Activated B cell treated with CpG ODN at 0.5 μM for 24 hours (primary cell): ENCODE measurements at regions of chr9 and their contacts with region 1.

Region 1: DNA sequence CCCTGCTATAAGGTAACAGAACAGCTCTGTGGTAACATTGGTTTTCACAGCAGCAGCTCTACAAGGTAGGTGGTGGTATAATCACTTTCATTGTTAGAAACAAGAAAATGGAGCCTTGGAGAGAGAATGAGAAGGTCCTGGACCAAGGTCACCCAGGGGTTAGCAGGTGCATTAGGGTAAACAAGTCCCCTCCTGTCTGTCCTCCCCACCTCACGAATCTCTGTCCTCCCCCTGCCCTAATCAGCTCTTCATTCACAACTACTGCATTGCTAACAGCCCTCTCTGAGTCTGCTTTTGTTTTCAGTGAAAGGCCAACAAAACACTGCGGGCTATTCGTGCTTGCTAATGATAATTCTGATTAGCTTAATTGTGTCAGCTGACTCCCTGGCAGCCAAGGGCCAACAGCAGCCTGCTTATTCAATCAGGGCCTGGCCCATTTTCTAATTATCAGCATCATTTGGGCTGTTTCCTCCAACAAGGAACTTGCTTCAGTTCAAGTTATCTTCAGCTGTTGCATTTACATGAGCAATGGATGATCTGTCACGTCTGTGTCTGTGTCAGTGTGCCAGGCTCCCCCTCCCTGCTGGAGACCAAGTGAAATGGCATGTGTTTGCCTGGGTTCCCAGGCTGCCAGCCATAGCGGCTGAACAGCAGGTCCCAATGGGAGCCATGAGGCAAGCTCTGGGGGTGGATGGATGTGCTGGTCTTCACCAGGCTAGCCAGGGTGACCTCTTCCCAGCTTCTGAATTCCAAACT is 56.7 kb upstream of the EQTN start:
- DNase-seq: no peak
- ATAC-seq: peak; percentile 78
- H3K4me3 Mint-ChIP-seq: no peak overlapping the region
- H3K27ac Mint-ChIP-seq: peak overlapping the region; percentile 14
- H3K4me1 Mint-ChIP-seq: peaks cover 58% of the 10 kb centered on the region
- H3K27me3 Mint-ChIP-seq: no peaks in the 10 kb centered on the region
- CTCF ChIP-seq: no peak

Region 2: DNA sequence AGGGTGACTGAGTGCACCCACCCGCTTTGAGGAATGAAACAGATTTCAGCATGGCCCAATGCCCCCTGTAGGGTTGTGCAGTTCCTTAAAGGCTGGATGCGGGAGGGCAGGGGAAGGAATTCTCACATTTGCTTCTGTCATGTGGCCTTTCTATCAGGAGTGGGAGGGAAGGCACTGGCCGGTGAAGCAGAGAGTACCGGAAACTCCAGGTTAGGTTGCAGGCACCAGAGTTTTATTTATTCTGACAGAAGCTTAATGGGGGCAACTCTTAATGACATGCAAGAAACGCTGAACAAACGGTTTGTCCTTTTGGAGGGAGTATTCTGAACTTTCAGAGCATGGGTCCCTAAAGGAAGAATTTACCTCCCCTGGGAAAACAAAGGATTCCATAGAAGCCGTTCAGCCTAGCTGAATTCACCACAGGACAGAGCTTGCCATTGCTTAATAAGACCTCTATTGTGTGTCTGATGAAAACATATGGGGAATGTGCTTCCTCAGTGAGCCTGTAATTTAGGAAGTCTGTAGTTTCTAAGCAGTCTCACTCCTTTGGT is 12.6 kb before region 1 on chr9:
- CTCF ChIA-PET with region 1: interaction called, 4 read pairs
- POLR2A ChIA-PET with region 1: no interaction called
- intact Hi-C with region 1: loop called (anchors 2 kb)
- DNase-seq: no peak
- ATAC-seq: no peak
- H3K4me3 Mint-ChIP-seq: no peak overlapping the region
- H3K27ac Mint-ChIP-seq: no peak overlapping the region
- H3K4me1 Mint-ChIP-seq: peaks cover 13% of the 10 kb centered on the region
- H3K27me3 Mint-ChIP-seq: no peaks in the 10 kb centered on the region
- CTCF ChIP-seq: no peak

Region 3: DNA sequence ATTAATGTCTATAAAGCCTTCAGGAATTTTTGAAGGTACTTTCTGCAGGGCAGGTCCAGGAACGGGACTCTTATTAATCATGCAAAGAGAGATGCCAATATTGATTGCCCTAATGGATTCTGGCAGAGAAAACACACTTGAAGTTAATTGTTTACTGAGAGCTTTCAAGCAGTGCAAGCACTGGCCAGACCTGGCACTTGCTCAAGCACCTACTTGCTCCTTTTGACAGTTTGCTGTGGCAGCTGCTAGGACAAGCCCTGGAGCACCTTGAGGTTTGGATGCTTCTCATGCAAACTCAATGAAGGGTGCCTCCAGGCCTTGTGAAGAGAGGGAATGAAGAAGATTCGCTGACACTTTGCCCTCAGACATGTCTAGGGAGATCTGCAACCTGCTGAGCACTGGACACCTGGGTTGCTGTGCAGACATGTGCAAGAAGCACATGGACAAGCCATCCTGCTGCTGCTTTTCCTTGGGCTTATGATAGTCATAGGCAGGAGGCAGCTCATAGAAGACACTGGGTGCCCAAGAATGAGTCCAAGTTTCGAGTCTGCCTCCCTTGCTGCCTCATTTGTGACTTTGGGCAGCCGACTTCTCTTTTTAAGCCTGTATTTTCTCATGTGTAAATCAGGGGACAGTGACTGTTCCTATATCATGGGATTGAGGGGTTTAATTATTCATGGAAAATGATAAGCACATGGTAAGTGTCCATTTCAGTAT is 32.1 kb after region 1 on chr9:
- CTCF ChIA-PET with region 1: no interaction called
- POLR2A ChIA-PET with region 1: no interaction called
- intact Hi-C with region 1: loop called (anchors 5 kb)
- DNase-seq: no peak
- ATAC-seq: no peak
- H3K4me3 Mint-ChIP-seq: peak overlapping the region; percentile 19
- H3K27ac Mint-ChIP-seq: no peak overlapping the region
- H3K4me1 Mint-ChIP-seq: peaks cover 86% of the 10 kb centered on the region
- H3K27me3 Mint-ChIP-seq: no peaks in the 10 kb centered on the region
- CTCF ChIP-seq: no peak

Region 4: GRCh38 chr9:27499481-27499880 is 145.8 kb after region 1 on chr9:
- CTCF ChIA-PET with region 1: no interaction called
- POLR2A ChIA-PET with region 1: no interaction called
- intact Hi-C with region 1: no loop called
- DNase-seq: no peak
- ATAC-seq: no peak
- H3K4me3 Mint-ChIP-seq: no peak overlapping the region
- H3K27ac Mint-ChIP-seq: no peak overlapping the region
- H3K4me1 Mint-ChIP-seq: peaks cover 59% of the 10 kb centered on the region
- H3K27me3 Mint-ChIP-seq: no peaks in the 10 kb centered on the region
- CTCF ChIP-seq: no peak